Lower leg skin (tissue), 4 donors: ENCODE measurements at regions of chr10 and their contacts with region 1.

Region 1: GRCh38 chr10:5260828-5261227 is 64.2 kb downstream of the AKR1C4 start:
- DNase-seq: no peak
- H3K4me3 ChIP-seq: no peak overlapping the region
- CTCF ChIP-seq: no peak
- POLR2A ChIP-seq: no peak

Region 2: DNA sequence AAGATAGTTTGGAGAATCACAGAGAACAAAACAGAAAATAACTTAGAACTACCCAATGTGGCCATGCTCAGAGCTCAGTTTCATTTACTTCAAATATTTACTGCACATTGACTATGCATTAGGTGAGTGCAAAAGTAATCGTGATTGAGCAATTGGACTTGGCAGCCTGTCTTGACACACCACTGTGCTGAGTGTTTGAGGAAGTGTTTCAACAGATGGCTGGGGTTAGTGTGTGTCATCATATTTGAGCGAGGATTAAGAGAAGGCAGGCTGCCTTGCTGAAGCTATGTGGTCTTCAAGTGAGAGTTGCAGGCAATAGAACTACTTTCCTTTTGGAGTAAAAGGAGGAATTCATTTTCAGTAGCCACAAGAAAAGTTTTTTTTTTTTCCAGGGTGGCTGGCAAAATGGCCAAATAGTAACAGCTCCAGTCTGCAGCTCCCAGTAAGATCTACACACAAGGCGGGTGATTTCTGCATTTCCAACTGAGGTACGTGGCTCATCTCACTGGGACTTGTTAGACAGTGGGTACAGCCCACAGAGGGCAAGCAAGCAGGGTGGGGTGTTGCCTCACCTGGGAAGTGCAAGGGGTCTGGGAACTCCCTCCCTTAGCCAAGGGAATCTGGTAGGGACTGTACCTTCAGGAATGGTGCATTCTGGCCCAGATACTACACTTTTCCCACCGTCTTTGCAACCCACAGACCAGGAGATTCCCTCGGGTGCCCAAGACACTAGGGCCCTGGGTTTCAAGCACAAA is 26.5 kb before region 1 on chr10:
- intact Hi-C with region 1: loop called (anchors 1 kb)
- DNase-seq: peak in 1 of 2 donors; percentile 55
- H3K4me3 ChIP-seq: no peak overlapping the region
- CTCF ChIP-seq: no peak
- POLR2A ChIP-seq: no peak